CD8-positive, alpha-beta memory T cell (primary cell): ENCODE measurements at regions of chr1 and their contacts with region 1.

Region 1: DNA sequence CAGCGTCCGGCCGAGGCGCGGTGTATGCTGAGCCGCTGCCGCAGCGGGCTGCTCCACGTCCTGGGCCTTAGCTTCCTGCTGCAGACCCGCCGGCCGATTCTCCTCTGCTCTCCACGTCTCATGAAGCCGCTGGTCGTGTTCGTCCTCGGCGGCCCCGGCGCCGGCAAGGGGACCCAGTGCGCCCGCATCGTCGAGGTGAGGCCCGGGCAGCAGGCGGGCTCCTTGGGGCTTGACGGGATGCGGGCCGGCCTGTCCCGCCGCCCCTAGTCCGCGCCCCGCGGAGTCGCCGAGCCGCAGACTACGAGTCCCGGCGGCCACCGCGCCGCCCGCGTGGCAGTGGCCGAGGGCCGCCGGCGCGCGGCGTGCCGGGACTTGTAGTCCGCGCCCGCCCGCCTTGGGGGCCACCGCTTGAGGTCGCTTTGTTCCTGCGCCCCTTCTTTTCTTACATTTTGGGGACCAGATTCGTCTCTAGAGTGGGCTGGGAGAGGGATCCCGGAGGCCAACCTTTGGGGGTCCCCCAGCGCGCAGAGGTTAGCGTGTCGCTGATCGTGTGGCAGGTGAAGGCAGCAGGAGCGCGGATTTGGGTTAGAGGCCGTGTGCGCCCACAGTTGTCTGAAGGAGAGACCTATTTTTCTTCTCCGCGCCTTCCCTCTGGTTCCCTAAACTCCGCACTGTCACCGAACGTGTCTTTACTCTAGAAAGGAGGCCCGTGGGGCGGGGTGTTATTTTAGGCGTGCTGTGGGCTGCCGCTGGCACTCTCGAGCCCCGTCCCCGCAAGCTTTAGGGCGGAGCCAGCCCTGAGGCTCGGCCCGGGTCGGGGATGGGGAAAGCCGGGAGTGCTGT is 553 bp downstream of the CMPK1 start:
- DNase-seq: peak; percentile 67 to 81 (median 77)
- H3K4me3 ChIP-seq: peak overlapping the region; percentile 98
- H3K4me3 Mint-ChIP-seq: peak overlapping the region in 4 of 7 donors; percentile 92 to 97 (median 94)
- H3K27ac ChIP-seq: peak overlapping the region; percentile 89
- H3K27ac Mint-ChIP-seq: peak overlapping the region in 7 of 8 donors; percentile 86 to 98 (median 94)
- H3K4me1 ChIP-seq: peaks cover 28% of the 10 kb centered on the region
- H3K4me1 Mint-ChIP-seq: peaks cover 21 to 31% (median 27%) of the 10 kb centered on the region in 3 donors
- H3K27me3 ChIP-seq: no peaks in the 10 kb centered on the region
- H3K27me3 Mint-ChIP-seq: no peaks in the 10 kb centered on the region

Region 2: DNA sequence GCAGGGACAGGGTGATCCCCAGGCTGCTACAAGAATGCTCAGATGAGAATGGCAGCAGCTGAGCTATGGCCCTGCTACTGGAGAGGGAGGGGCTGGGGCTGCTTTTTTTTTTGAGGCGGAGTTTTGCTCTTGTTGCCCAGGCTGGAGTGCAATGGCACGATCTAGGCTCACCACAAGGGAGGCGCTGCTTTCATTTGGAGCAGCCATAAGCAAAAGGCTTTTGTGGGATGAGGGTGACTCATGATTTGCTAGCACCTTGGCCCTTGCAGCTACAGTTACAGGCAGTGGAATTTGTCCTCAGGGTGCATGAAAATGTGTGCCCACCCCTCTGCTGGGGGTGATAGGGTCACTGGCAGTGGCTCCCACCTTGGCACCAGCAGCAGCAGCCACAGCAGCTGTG is 229.3 kb before region 1 on chr1:
- CTCF ChIA-PET with region 1: no interaction called
- POLR2A ChIA-PET with region 1: no interaction called
- DNase-seq: no peak
- H3K4me3 ChIP-seq: no peak overlapping the region
- H3K4me3 Mint-ChIP-seq: no peak overlapping the region
- H3K27ac ChIP-seq: no peak overlapping the region
- H3K27ac Mint-ChIP-seq: no peak overlapping the region
- H3K4me1 ChIP-seq: no peaks in the 10 kb centered on the region
- H3K4me1 Mint-ChIP-seq: no peaks in the 10 kb centered on the region
- H3K27me3 ChIP-seq: no peaks in the 10 kb centered on the region
- H3K27me3 Mint-ChIP-seq: peaks cover 10 to 24% of the 10 kb centered on the region in 2 donors

Region 3: DNA sequence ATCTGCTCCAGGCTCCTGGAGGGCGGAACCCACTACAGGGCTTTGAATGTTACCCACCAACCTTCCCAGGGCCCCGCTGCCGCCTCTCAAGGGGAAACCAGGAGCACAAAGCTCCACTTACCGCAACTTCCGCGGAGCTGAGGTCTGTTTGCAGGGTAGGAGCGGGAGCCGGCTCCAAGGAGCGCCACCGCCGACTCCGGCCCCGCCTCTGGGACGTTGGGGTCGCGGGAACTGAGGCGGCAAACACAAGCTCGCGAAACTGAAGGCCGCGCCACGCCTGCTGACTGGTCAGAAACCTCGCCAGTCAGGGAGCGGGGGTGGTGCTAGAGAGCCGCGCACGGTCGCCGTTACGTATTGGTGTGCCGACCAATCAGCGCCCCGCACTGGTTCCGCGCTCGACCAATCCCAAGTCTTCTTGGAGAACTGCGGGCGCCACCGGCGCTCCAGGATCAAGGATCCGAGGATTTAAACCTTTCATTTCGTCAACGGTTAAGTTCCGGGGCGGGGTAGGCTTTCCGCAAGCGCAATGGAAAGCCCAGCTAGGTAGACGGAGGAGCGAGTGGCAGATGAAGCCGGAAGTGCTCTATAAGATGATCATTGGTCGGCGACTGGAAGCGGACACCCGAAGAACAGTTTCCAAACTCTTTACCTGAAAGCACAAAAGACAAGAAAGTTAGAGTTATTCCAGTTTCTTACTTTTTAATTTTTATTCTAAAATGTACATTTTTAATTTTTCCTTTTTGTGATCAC is 20.1 kb before region 1 on chr1 and contains the start of gene STIL:
- CTCF ChIA-PET with region 1: interaction called, 14 read pairs
- POLR2A ChIA-PET with region 1: interaction called, 20 read pairs
- DNase-seq: peak; percentile 95 to 97 (median 96)
- H3K4me3 ChIP-seq: peak within 1 kb of the TSS; percentile 85
- H3K4me3 Mint-ChIP-seq: peak within 1 kb of the TSS; percentile 87 to 97 (median 93)
- H3K27ac ChIP-seq: peak within 1 kb of the TSS; percentile 82
- H3K27ac Mint-ChIP-seq: peak within 1 kb of the TSS; percentile 87 to 98 (median 93)
- H3K4me1 ChIP-seq: peaks cover 7% of the 10 kb centered on the region
- H3K4me1 Mint-ChIP-seq: peaks cover 16 to 21% (median 18%) of the 10 kb centered on the region in 3 donors
- H3K27me3 ChIP-seq: no peaks in the 10 kb centered on the region
- H3K27me3 Mint-ChIP-seq: peaks cover 0 to 5% of the 10 kb centered on the region in 2 donors
- total RNA-seq, gene STIL: 18.4 to 19.1 TPM

Region 4: DNA sequence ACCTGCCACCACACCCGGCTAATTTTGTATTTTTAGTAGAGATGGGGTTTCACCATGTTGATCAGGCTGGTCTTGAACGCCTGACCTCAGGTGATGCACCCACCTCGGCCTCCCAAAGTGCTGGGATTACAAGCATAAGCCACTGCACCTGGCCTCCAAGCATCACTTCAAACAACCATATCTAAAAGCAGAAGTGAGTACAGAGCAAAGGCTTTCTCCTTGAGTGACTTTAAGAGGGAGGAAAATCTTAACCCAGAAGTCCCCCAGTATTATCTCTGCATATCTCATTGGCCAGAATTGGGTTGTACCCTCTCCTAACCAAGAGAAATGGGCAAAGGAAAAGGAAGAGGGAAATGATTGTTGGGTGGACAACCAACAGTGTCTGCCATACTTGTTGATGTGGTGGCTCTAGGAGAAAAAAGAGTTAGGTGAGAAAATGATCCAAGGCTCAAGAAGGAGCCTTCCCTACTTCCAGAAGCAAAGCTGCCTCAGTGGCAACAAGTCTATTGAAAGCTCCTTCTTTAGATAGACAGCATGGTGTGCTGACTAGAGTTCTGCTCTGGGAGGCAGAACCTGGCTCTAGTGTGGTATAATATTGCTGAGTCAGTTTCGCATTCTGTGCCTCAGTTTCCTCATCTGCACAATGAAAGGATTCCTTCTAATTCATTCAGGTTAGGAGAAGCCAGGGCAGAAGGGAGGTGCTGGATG is 65.1 kb after region 1 on chr1:
- CTCF ChIA-PET with region 1: no interaction called
- POLR2A ChIA-PET with region 1: no interaction called
- DNase-seq: no peak
- H3K4me3 ChIP-seq: no peak overlapping the region
- H3K4me3 Mint-ChIP-seq: no peak overlapping the region
- H3K27ac ChIP-seq: no peak overlapping the region
- H3K27ac Mint-ChIP-seq: no peak overlapping the region
- H3K4me1 ChIP-seq: no peaks in the 10 kb centered on the region
- H3K4me1 Mint-ChIP-seq: no peaks in the 10 kb centered on the region
- H3K27me3 ChIP-seq: peaks cover 10% of the 10 kb centered on the region
- H3K27me3 Mint-ChIP-seq: peaks cover 14 to 49% of the 10 kb centered on the region in 2 donors